AG04450 (cell line): ENCODE measurements at regions of chr9 and their contacts with region 1.

Region 1: DNA sequence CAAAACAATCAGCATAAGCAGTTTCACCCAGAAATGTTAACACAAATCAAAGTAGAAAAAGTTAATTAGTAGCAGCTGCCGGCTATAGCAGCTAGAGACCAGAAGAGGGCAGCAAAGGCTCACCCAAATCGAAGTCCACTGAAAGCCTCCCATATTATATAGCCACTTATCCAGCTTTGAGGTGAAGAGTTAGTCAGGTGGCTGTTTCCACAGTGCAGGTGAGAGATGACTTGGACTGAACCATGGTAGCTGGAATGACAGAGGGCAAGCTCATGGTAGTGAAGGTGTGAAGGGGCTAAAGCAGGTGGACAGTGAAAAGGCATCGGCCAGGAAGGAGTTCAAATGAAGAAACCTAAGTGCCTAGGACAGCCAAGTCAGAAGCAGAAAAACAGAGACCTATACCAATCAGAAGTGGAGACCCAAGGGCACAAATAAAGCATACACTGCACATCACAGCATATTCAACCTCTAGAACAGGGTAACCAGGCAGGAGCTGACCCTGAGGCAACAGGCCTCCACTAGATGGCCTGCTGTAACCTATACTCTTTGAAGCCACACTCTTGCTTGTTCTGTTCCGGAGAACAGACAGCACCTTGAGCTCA is 7.2 kb upstream of the RNF38 start:
- DNase-seq: no peak
- H3K4me3 ChIP-seq: no peak overlapping the region
- H3K27ac ChIP-seq: no peak overlapping the region
- H3K27me3 ChIP-seq: no peaks in the 10 kb centered on the region
- CTCF ChIP-seq: peak; percentile 91

Region 2: GRCh38 chr9:35603987-35604577 is 803.1 kb before region 1 on chr9:
- CTCF ChIA-PET with region 1: no interaction called
- POLR2A ChIA-PET with region 1: no interaction called
- DNase-seq: peak; percentile 99
- H3K4me3 ChIP-seq: peak overlapping the region; percentile 77
- H3K27ac ChIP-seq: peak overlapping the region; percentile 98
- H3K27me3 ChIP-seq: no peaks in the 10 kb centered on the region
- CTCF ChIP-seq: peak; percentile 86

Region 3: GRCh38 chr9:36166101-36166927 is 240.9 kb before region 1 on chr9:
- CTCF ChIA-PET with region 1: no interaction called
- POLR2A ChIA-PET with region 1: no interaction called
- DNase-seq: no peak
- H3K4me3 ChIP-seq: peak overlapping the region; percentile 63
- H3K27ac ChIP-seq: peak overlapping the region; percentile 57
- H3K27me3 ChIP-seq: no peaks in the 10 kb centered on the region
- CTCF ChIP-seq: peak; percentile 84

Region 4: DNA sequence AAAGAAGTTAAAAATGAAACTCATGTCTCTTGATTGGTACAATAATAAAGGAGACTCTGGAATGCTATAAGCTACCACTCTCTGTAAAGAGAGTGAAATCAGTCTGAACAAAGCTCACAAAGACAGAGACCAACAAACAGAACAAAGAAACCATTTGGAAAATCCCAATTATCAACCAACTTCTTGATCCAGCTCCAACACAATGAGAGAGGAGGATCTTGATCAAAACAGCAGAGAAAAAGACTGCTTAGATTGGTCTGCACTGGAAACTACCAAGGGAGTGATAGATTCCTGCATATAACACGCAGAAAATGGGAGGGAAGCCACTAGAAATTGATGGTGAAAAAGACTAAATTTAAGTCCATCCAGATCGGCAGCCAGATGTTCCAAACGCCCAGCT is 16.0 kb after region 1 on chr9:
- CTCF ChIA-PET with region 1: interaction called, 39 read pairs
- POLR2A ChIA-PET with region 1: interaction called, 4 read pairs
- DNase-seq: no peak
- H3K4me3 ChIP-seq: no peak overlapping the region
- H3K27ac ChIP-seq: no peak overlapping the region
- H3K27me3 ChIP-seq: no peaks in the 10 kb centered on the region
- CTCF ChIP-seq: no peak

Region 5: GRCh38 chr9:36441966-36442365 is 34.7 kb after region 1 on chr9:
- CTCF ChIA-PET with region 1: interaction called, 21 read pairs
- POLR2A ChIA-PET with region 1: no interaction called
- DNase-seq: no peak
- H3K4me3 ChIP-seq: no peak overlapping the region
- H3K27ac ChIP-seq: no peak overlapping the region
- H3K27me3 ChIP-seq: no peaks in the 10 kb centered on the region
- CTCF ChIP-seq: no peak

Region 6: GRCh38 chr9:36461323-36461722 is 54.1 kb after region 1 on chr9:
- CTCF ChIA-PET with region 1: interaction called, 18 read pairs
- POLR2A ChIA-PET with region 1: no interaction called
- DNase-seq: peak; percentile 6
- H3K4me3 ChIP-seq: no peak overlapping the region
- H3K27ac ChIP-seq: no peak overlapping the region
- H3K27me3 ChIP-seq: no peaks in the 10 kb centered on the region
- CTCF ChIP-seq: no peak

Region 7: DNA sequence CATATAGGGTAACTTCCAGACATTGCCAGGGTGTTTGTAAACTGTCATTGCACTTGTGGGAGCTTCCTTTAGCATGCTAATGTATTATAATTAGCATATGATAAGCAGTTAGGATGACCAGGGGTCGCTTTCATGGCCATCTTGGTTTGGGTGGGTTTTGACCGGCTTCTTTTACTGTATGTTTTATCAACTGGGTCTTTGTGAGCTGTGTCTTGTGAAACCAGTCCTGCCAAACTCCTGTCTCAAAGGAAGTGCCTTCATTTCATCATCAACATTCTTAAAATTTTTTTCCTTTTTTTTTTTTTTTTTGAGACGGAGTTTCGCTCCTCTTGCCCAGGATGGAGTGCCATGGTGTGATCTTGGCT is 153.6 kb after region 1 on chr9:
- CTCF ChIA-PET with region 1: interaction called, 167 read pairs
- POLR2A ChIA-PET with region 1: interaction called, 6 read pairs
- DNase-seq: no peak
- H3K4me3 ChIP-seq: no peak overlapping the region
- H3K27ac ChIP-seq: no peak overlapping the region
- H3K27me3 ChIP-seq: no peaks in the 10 kb centered on the region
- CTCF ChIP-seq: no peak

Region 8: GRCh38 chr9:36728651-36729520 is 321.7 kb after region 1 on chr9:
- CTCF ChIA-PET with region 1: interaction called, 56 read pairs
- POLR2A ChIA-PET with region 1: no interaction called
- DNase-seq: peak; percentile 66
- H3K4me3 ChIP-seq: no peak overlapping the region
- H3K27ac ChIP-seq: no peak overlapping the region
- H3K27me3 ChIP-seq: no peaks in the 10 kb centered on the region
- CTCF ChIP-seq: peak; percentile 84